Cardiac septum (tissue), 1 donor: ENCODE measurements at regions of chr12 and their contacts with region 1.

Region 1: DNA sequence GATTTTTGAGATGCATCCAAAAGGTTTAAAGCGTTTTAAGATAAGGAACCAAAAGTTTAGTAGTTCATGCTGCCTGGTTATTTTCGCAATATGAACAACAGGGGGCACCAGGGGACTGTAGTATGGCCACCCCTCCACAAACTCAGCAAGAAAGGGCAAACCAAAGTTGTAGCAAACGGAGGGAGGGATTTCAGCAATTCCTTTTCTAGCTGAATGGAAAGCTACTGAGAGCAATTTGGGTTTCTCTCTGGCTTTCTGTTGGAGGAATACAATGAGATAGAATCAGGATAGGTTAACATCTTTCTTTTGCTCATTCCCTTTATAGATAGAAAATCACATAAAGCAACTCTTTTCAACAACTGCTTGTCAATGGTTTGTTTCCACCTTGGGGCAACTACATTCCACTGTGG is 62.5 kb downstream of the DRAM1 start:
- DNase-seq: no peak

Region 2: GRCh38 chr12:102095675-102096263 is 155.9 kb after region 1 on chr12:
- intact Hi-C with region 1: no loop called
- DNase-seq: no peak

Region 3: DNA sequence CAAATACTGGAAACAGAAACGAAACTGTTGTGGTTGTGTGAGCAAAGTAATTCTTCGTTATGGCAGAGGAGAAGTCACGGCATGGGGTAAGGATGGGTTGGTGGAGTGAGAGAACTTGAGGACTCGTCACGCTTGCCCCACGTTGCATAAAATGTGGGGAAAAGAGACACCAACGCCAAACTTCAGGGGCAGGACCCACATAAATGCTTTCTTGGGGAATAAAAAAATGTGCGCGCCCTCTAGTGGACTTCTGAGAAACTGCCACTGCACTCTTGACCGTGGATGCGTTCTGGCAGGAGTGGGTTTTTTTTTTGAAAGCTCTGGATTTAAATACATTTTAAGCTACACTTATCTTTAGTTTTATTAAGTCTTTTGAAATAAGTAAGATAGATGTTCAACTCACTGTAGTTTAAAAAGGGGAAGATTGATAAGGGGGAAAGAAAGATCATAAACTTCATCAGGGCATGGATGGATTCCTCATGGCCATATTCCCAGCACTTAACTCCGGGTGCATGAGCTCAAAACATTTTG is 544.6 kb after region 1 on chr12:
- intact Hi-C with region 1: loop called (anchors 5 kb)
- DNase-seq: no peak

Region 4: GRCh38 chr12:102757154-102757881 is 817.5 kb after region 1 on chr12:
- intact Hi-C with region 1: loop called (anchors 2 kb)
- DNase-seq: peak; percentile 79